Vagina (tissue), 2 donors: ENCODE measurements at regions of chr7 and their contacts with region 1.

Region 1: GRCh38 chr7:41134300-41135250 is 568.3 kb downstream of the INHBA start:
- DNase-seq: no peak
- H3K4me3 ChIP-seq: no peak overlapping the region
- H3K27ac ChIP-seq: no peak overlapping the region
- H3K4me1 ChIP-seq: peaks cover 10% of the 10 kb centered on the region
- H3K27me3 ChIP-seq: no peaks in the 10 kb centered on the region
- CTCF ChIP-seq: no peak
- POLR2A ChIP-seq: no peak

Region 2: DNA sequence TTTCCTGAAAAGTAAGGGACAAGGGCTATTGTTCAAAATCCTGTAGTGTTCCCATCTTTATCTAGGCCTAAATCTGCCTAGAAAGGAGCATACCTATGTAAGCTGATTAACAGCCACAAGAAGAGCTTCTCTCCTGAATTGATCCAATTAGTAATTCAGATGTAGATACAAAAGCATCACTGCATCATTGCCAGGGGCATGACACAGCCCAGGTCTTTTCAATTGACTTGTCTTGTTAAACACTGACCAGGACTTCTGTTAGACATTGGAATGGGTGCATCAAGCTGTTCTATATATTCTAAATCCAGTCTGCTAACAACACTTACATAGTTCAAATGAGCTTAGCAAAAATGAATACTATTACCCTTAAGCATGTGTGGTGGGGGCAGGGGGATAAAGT is 20.9 kb before region 1 on chr7:
- intact Hi-C with region 1: loop called (anchors 1 kb)
- DNase-seq: no peak
- H3K4me3 ChIP-seq: no peak overlapping the region
- H3K27ac ChIP-seq: no peak overlapping the region
- H3K4me1 ChIP-seq: no peaks in the 10 kb centered on the region
- H3K27me3 ChIP-seq: no peaks in the 10 kb centered on the region
- CTCF ChIP-seq: no peak
- POLR2A ChIP-seq: no peak

Region 3: GRCh38 chr7:41148521-41148951 is 14.0 kb after region 1 on chr7:
- intact Hi-C with region 1: no loop called
- DNase-seq: no peak
- H3K4me3 ChIP-seq: no peak overlapping the region
- H3K27ac ChIP-seq: no peak overlapping the region
- H3K4me1 ChIP-seq: peaks cover 11% of the 10 kb centered on the region
- H3K27me3 ChIP-seq: no peaks in the 10 kb centered on the region
- CTCF ChIP-seq: no peak
- POLR2A ChIP-seq: no peak

Region 4: DNA sequence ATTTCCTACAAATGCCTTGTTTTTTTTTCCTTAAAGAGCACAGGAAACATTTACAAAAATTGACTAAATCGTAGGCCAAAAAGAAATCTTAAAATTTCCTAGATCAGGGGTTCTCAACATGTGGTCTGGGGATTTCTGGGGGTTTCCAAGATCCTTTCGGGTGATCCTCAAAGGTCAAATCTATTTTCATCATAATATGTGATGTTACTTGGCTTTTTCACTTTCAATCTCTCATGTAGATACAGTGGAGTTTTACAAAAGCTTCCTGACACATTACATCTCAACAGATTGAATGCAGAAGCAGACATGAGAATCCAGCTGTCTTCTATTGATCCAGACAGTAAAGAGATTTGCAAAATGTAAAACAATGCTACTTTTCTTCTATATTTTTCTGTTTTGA is 71.0 kb after region 1 on chr7:
- intact Hi-C with region 1: no loop called
- DNase-seq: no peak
- H3K4me3 ChIP-seq: no peak overlapping the region
- H3K27ac ChIP-seq: no peak overlapping the region
- H3K4me1 ChIP-seq: no peaks in the 10 kb centered on the region
- H3K27me3 ChIP-seq: no peaks in the 10 kb centered on the region
- CTCF ChIP-seq: no peak
- POLR2A ChIP-seq: no peak